Endothelial cell of umbilical vein (primary cell): ENCODE measurements at regions of chr16 and their contacts with region 1.

Region 1: GRCh38 chr16:3457434-3458252 is 14.2 kb downstream of the NAA60 start:
- DNase-seq: peak; percentile 88
- H3K4me3 ChIP-seq: peak overlapping the region; percentile 44 to 62 (median 47)
- H3K27ac ChIP-seq: peak overlapping the region; percentile 77
- H3K4me1 ChIP-seq: peaks cover 27% of the 10 kb centered on the region
- H3K27me3 ChIP-seq: no peaks in the 10 kb centered on the region
- CTCF ChIP-seq: peak; percentile 38 to 64
- POLR2A ChIP-seq: peak; percentile 77

Region 2: GRCh38 chr16:3182608-3183444 is 274.8 kb before region 1 on chr16:
- CTCF ChIA-PET with region 1: no interaction called
- POLR2A ChIA-PET with region 1: no interaction called
- dilution Hi-C with region 1: no loop called
- intact Hi-C with region 1: loop called (anchors 5 kb)
- DNase-seq: peak; percentile 45
- H3K4me3 ChIP-seq: peak overlapping the region; percentile 36 to 79 (median 67)
- H3K27ac ChIP-seq: no peak overlapping the region
- H3K4me1 ChIP-seq: peaks cover 15% of the 10 kb centered on the region
- H3K27me3 ChIP-seq: peaks cover 10% of the 10 kb centered on the region in 2 experiments
- CTCF ChIP-seq: peak in 1 of 2 donors; percentile 51
- POLR2A ChIP-seq: no peak

Region 3: DNA sequence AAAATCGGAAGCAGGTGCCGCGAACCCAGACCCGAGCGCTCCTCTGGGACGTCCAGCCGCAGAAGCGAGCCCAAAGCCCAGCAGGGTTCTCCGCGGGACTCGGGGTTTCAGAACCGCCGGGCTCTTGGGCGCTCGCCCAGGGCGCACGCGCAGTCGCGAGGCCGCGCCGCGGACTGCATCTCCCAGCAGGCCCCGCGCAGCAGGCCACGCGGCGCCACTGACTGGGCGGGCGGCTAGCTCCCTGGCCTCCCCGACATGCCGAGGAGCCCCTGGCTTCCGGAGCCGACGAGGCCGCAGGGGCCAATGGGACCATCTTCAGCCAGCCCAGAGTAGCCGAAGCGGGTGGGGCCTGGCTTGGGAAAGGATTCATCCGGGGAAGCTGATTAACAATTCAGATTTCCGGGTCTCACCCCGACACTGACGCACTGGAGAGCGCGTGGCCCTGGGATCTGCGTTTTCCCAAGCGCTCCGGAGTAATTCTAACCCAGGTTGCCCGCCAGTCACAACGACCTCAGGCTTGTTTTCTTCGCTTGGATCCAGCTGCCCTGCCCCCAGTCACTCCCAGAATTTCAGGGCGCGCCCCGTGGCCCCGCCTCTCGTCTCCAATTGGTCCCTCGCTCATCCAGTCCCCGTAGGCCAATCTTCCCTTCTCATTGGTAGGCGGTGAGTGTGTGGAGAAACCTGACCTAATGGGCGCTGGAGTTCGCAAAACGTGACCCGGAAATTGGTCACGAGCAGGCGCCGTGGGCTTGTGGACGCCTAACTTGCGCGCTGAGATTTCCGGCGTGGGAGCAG is 174.7 kb before region 1 on chr16 and contains the start of gene ZNF263:
- CTCF ChIA-PET with region 1: interaction called, 5 read pairs
- POLR2A ChIA-PET with region 1: no interaction called
- dilution Hi-C with region 1: no loop called
- intact Hi-C with region 1: loop called (anchors 2 kb)
- DNase-seq: peak; percentile 98
- H3K4me3 ChIP-seq: peak within 1 kb of the TSS; percentile 74 to 79 (median 77)
- H3K27ac ChIP-seq: peak within 1 kb of the TSS; percentile 92
- H3K4me1 ChIP-seq: peaks cover 13% of the 10 kb centered on the region
- H3K27me3 ChIP-seq: peaks cover 2 to 6% of the 10 kb centered on the region in 2 experiments
- CTCF ChIP-seq: no peak
- POLR2A ChIP-seq: peak; percentile 75
- total RNA-seq, gene ZNF263: 20.8 and 22.7 TPM in 2 replicates

Region 4: GRCh38 chr16:3443108-3444031 is 14.3 kb before region 1 on chr16 and contains the starts of genes NAA60 and ZNF597:
- CTCF ChIA-PET with region 1: interaction called, 16 read pairs
- POLR2A ChIA-PET with region 1: interaction called, 6 read pairs
- dilution Hi-C with region 1: no loop called
- intact Hi-C with region 1: no loop called
- DNase-seq: peak; percentile 90
- H3K4me3 ChIP-seq: peak within 1 kb of the TSS; percentile 57 to 78 (median 69)
- H3K27ac ChIP-seq: peak within 1 kb of the TSS; percentile 92
- H3K4me1 ChIP-seq: peaks cover 3% of the 10 kb centered on the region
- H3K27me3 ChIP-seq: no peaks in the 10 kb centered on the region
- CTCF ChIP-seq: no peak
- POLR2A ChIP-seq: no peak
- total RNA-seq, gene NAA60: 42.9 and 45.7 TPM in 2 replicates
- total RNA-seq, gene ZNF597: 1.4 and 1.9 TPM in 2 replicates

Region 5: DNA sequence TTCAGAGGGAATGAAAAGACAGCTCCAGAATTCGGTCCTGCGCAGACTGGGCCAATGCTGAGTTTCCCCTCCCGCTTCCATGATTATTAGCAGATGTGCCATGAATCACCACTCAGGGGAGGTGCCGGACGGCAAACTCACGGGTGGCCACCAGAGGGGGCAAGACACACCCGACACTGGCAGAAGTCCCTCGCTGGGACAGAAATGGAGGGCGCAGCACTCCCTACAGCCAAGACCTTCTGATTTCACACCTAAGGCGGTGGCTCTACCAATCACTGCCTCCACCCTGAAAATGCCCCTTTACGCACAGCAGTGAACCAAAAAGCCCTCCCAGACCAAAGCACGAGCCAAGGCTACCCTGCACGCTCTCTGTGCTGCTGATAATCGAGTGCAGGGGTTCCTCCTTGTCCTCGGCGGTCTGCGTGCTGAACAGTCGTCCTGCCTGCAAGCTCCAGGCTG is 232.9 kb after region 1 on chr16:
- CTCF ChIA-PET with region 1: no interaction called
- POLR2A ChIA-PET with region 1: no interaction called
- dilution Hi-C with region 1: no loop called
- intact Hi-C with region 1: no loop called
- DNase-seq: peak; percentile 94
- H3K4me3 ChIP-seq: no peak overlapping the region
- H3K27ac ChIP-seq: no peak overlapping the region
- H3K4me1 ChIP-seq: no peaks in the 10 kb centered on the region
- H3K27me3 ChIP-seq: no peaks in the 10 kb centered on the region
- CTCF ChIP-seq: peak; percentile 95 to 96
- POLR2A ChIP-seq: no peak